Thyroid gland (tissue), 4 donors: ENCODE measurements at regions of chr19 and their contacts with region 1.

Region 1: DNA sequence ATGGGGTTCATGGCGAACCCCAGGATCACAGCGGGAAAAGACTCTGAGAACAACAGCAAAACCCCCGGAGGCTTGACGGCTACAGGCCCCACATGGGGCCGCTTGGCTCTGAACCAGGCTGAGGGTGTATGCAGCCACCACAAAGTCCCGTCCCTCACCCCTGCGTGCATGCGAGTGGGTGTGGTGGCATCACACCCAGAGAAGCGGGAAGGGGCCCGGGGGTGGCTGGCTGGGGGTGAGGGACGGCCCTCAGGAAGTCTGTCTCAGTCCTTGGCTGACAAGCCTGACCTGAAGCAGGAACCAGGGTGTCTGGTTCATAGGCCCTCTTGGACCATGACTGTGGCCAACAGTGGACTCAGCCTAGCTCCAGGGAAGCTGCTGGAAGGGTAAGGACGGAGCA is 34.2 kb downstream of the CEBPG start:
- DNase-seq: no peak
- H3K4me3 ChIP-seq: no peak overlapping the region
- H3K27ac ChIP-seq: no peak overlapping the region
- H3K4me1 ChIP-seq: no peaks in the 10 kb centered on the region
- H3K27me3 ChIP-seq: no peaks in the 10 kb centered on the region
- CTCF ChIP-seq: no peak
- POLR2A ChIP-seq: no peak

Region 2: GRCh38 chr19:33241530-33242101 is 166.1 kb before region 1 on chr19:
- intact Hi-C with region 1: loop called (anchors 2 kb)
- DNase-seq: peak; percentile 24 to 36
- H3K4me3 ChIP-seq: no peak overlapping the region
- H3K27ac ChIP-seq: no peak overlapping the region
- H3K4me1 ChIP-seq: peaks cover 0 to 7% of the 10 kb centered on the region in 2 donors
- H3K27me3 ChIP-seq: no peaks in the 10 kb centered on the region
- CTCF ChIP-seq: peak; percentile 30 to 91 (median 84)
- POLR2A ChIP-seq: no peak

Region 3: DNA sequence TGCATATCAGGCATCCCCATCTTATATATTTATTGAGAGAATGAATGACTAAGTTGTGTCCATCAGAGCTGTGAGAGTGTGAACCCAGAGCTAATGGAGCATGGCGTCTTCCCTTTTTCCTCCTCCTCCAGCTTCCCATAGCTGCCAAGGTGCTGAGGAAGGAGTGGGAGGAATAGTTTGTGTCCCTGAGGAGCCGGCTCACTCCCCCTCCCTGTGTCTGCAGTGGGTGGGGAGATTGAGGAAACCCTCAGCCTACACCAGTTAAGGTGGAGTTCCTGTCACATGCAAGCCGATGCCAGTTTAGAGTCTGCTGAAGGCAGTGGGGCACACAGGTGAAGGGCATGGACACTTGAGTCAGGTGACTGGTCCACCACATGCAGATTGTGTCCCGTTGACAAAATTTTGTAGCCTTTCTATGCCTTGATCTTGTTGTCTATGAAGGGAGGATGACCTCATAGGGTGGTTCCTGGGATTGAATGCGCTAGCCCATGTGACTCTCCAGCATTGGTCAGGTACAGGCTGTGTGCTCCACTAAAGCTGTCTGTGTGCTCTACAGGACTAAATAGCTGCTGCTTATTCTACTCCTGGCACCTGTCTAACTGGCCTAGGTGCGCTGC is 909.7 kb after region 1 on chr19:
- intact Hi-C with region 1: no loop called
- DNase-seq: peak; percentile 28 to 46
- H3K4me3 ChIP-seq: no peak overlapping the region
- H3K27ac ChIP-seq: peak overlapping the region; percentile 38 to 47 (median 42)
- H3K4me1 ChIP-seq: peaks cover 14 to 31% of the 10 kb centered on the region in 2 donors
- H3K27me3 ChIP-seq: no peaks in the 10 kb centered on the region
- CTCF ChIP-seq: no peak
- POLR2A ChIP-seq: no peak